ENCODE measurements at regions of chr15 and their contacts with region 1.

Region 1: DNA sequence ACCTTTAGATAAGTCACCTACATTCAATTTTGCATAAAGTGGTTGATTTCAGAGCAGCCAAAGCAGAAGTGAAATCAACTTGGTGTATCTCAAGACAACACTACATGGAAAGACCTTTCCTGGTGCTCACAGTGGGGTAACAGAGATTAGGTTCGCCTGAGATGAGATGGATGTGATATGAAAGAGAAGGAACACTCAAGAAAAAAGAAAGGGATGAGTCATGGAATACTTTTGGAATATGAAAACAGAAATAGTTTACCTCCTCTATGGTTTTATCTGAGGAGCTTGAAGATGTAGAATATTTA is 53.4 kb upstream of the AP4E1 start:
- DNase-seq: no peak
- H3K4me3 ChIP-seq: no peak overlapping the region
- H3K27ac ChIP-seq: no peak overlapping the region
- H3K4me1 ChIP-seq: peaks cover 8% of the 10 kb centered on the region
- H3K27me3 ChIP-seq: no peaks in the 10 kb centered on the region
- CTCF ChIP-seq: no peak

Region 2: GRCh38 chr15:50765195-50765973 is 89.7 kb before region 1 on chr15 and contains the start of gene SPPL2A:
- dilution Hi-C with region 1: loop called (anchors 25 kb)
- DNase-seq: peak; percentile 40
- H3K4me3 ChIP-seq: peak within 1 kb of the TSS; percentile 58 to 98 (median 79)
- H3K27ac ChIP-seq: peak within 1 kb of the TSS; percentile 75
- H3K4me1 ChIP-seq: peaks cover 4% of the 10 kb centered on the region
- H3K27me3 ChIP-seq: no peaks in the 10 kb centered on the region
- CTCF ChIP-seq: no peak
- polyA plus RNA-seq, gene SPPL2A: 37.2 to 59.4 TPM (median 44.5 TPM) in 3 replicates

Measured in keratinocyte (primary cell).